ENCODE measurements at regions of chr3 and their contacts with region 1.

Region 1: GRCh38 chr3:134260984-134261383 is 10.3 kb upstream of the RYK start:
- DNase-seq: no peak
- ATAC-seq: no peak
- H3K4me3 ChIP-seq: no peak overlapping the region
- H3K27ac ChIP-seq: no peak overlapping the region
- H3K4me1 ChIP-seq: no peaks in the 10 kb centered on the region
- H3K27me3 ChIP-seq: no peaks in the 10 kb centered on the region
- CTCF ChIP-seq: no peak

Region 2: DNA sequence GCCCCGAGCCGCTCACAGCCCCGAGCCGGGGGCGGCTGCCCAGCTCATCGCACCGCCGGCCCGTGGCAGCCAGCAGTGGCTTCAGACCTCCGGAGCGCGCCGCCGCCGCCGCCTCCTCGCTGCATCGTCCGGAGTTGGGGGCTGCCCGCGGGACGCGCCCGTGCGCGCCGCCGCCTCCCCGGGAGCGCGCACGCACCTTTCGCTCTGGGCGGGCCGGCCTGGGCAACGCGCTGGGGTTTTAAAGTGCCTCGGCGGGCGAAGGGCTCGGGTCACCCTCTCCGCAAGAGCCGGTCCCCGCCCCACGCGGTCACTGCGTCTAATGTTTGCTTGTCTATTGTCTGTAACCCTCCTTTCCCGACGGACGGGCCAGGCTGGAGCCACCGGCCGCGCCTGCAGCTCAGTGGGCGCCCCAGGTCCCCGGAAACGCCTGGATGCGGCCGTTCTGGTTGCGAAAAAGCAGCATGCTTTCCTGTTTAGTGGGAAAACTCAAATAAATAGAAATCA is 10.2 kb before region 1 on chr3 and contains the start of gene RYK:
- CTCF ChIA-PET with region 1: no interaction called
- POLR2A ChIA-PET with region 1: interaction called, 10 read pairs
- in situ Hi-C with region 1: no loop called
- intact Hi-C with region 1: no loop called
- DNase-seq: no peak
- ATAC-seq: peak; percentile 96
- H3K4me3 ChIP-seq: peak within 1 kb of the TSS; percentile 70 to 84
- H3K27ac ChIP-seq: peak within 1 kb of the TSS; percentile 90
- H3K4me1 ChIP-seq: peaks cover 28% of the 10 kb centered on the region
- H3K27me3 ChIP-seq: no peaks in the 10 kb centered on the region
- CTCF ChIP-seq: no peak
- total RNA-seq, gene RYK: 82.7 TPM

Region 3: DNA sequence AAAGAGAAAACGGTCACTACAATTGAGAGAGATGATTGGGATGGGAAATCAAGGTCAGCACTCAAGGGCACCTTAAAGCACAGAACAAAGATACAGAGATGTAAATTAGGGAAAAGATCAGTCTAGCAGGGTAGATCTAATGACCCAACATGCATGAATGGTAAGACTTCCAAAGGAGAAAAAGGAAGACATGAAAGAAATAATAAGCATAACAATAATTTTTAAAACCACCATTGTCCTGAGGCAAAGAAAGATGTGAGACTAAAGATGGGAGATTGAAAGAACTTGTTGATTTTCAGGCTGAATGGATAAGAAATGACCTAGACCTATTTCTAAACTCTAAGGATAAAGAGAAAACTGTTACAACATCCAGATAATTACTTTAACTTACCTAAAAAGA is 148.1 kb after region 1 on chr3:
- CTCF ChIA-PET with region 1: no interaction called
- POLR2A ChIA-PET with region 1: no interaction called
- in situ Hi-C with region 1: no loop called
- intact Hi-C with region 1: no loop called
- DNase-seq: no peak
- ATAC-seq: no peak
- H3K4me3 ChIP-seq: no peak overlapping the region
- H3K27ac ChIP-seq: no peak overlapping the region
- H3K4me1 ChIP-seq: no peaks in the 10 kb centered on the region
- H3K27me3 ChIP-seq: no peaks in the 10 kb centered on the region; the same call in 1 of the 2 replicates
- CTCF ChIP-seq: no peak

Region 4: GRCh38 chr3:134600685-134601463 is 339.9 kb after region 1 on chr3:
- CTCF ChIA-PET with region 1: no interaction called
- POLR2A ChIA-PET with region 1: no interaction called
- in situ Hi-C with region 1: no loop called
- intact Hi-C with region 1: no loop called
- DNase-seq: peak; percentile 8
- ATAC-seq: peak; percentile 86
- H3K4me3 ChIP-seq: no peak overlapping the region
- H3K27ac ChIP-seq: no peak overlapping the region
- H3K4me1 ChIP-seq: peaks cover 5% of the 10 kb centered on the region; the same call in 1 of the 2 replicates
- H3K27me3 ChIP-seq: peaks cover 12% of the 10 kb centered on the region
- CTCF ChIP-seq: peak; percentile 100

Region 5: GRCh38 chr3:134777341-134777740 is 516.4 kb after region 1 on chr3:
- CTCF ChIA-PET with region 1: no interaction called
- POLR2A ChIA-PET with region 1: no interaction called
- in situ Hi-C with region 1: no loop called
- intact Hi-C with region 1: no loop called
- DNase-seq: no peak
- ATAC-seq: no peak
- H3K4me3 ChIP-seq: no peak overlapping the region
- H3K27ac ChIP-seq: no peak overlapping the region
- H3K4me1 ChIP-seq: no peaks in the 10 kb centered on the region
- H3K27me3 ChIP-seq: peaks cover 9% of the 10 kb centered on the region
- CTCF ChIP-seq: no peak

Region 6: GRCh38 chr3:134985864-134986715 is 725.1 kb after region 1 on chr3:
- CTCF ChIA-PET with region 1: no interaction called
- POLR2A ChIA-PET with region 1: no interaction called
- in situ Hi-C with region 1: no loop called
- intact Hi-C with region 1: no loop called
- DNase-seq: no peak
- ATAC-seq: no peak
- H3K4me3 ChIP-seq: no peak overlapping the region
- H3K27ac ChIP-seq: no peak overlapping the region
- H3K4me1 ChIP-seq: no peaks in the 10 kb centered on the region
- H3K27me3 ChIP-seq: peaks cover 13% of the 10 kb centered on the region
- CTCF ChIP-seq: no peak